Caco-2 (cell line): ENCODE measurements at regions of chr11 and their contacts with region 1.

Region 1: DNA sequence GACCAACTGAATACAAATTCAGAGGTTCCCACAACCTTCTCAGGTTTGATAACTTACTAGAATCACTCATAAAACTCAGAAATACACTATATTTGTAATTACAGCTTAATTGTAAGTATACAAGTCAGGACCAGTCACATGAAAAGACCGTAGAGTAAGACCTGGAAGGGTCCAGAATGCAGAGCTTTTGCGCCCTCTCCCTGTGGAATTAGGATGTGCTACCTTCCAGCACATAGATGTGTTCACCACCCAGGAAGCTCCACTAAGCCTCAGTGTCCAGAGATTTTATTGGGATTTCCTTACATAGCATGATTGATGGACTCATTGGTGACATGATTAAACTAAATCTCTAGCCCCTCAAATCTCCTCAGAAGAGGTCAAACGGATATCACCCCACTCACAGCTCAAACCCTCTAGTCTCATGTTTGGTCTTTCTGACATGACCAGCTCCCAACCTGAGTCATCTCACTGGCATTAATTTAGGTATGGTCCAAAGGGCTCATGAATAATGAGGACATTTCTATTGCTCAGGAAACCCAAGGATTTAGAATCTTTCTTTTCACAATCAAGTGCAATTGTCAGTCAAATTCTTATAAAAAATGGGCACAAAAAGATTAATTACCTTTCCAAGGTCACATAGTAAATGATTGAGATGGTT is 77.2 kb upstream of the UBASH3B start:
- DNase-seq: no peak
- H3K4me3 ChIP-seq: no peak overlapping the region
- H3K4me3 Mint-ChIP-seq: no peak overlapping the region
- H3K27ac Mint-ChIP-seq: no peak overlapping the region
- H3K4me1 ChIP-seq: no peaks in the 10 kb centered on the region
- H3K4me1 Mint-ChIP-seq: peaks cover 7% of the 10 kb centered on the region
- H3K27me3 ChIP-seq: no peaks in the 10 kb centered on the region
- H3K27me3 Mint-ChIP-seq: peaks cover 12% of the 10 kb centered on the region
- CTCF ChIP-seq: no peak

Region 2: DNA sequence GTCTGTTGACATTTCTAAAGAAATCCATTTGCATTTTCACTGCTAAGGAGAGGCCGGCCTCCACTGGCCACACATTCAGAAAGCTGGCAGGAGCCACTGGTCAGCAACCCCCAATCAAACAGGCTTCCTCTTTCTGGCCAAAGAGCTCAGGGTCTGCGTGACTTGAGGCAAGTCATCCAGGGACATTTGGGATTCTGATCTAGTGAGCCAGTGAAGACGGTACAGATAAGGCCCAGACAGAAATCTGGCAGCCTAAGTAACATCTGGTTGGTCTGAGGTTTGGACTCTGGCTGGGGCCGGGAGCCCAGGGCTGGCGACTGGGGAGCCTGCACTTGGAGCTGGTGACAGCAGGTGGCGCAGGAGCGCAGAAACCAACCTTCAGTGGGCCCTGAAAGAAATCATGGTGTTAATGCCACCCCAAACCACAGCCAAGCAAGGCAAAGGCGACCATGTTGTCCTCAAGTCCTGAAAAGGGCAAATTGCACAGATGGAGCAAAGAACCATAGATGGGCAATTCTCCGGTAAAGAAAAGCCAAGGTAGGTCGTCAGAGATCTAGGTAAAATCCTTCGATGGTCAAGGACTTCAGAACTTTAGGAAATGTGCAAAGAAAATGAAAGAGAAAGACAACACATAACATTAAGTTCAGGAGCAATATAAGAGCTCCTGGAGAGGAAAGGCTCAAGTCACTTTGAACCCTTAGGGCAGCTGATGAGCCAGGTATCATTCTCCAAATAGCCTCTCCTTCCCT is 362.9 kb before region 1 on chr11:
- CTCF ChIA-PET with region 1: no interaction called
- POLR2A ChIA-PET with region 1: no interaction called
- intact Hi-C with region 1: loop called (anchors 1 kb)
- DNase-seq: peak; percentile 68 to 82
- H3K4me3 ChIP-seq: no peak overlapping the region
- H3K4me3 Mint-ChIP-seq: no peak overlapping the region
- H3K27ac Mint-ChIP-seq: no peak overlapping the region
- H3K4me1 ChIP-seq: no peaks in the 10 kb centered on the region
- H3K4me1 Mint-ChIP-seq: no peaks in the 10 kb centered on the region
- H3K27me3 ChIP-seq: no peaks in the 10 kb centered on the region
- H3K27me3 Mint-ChIP-seq: peaks cover 12% of the 10 kb centered on the region
- CTCF ChIP-seq: peak; percentile 98 to 99

Region 3: GRCh38 chr11:122754553-122755322 is 176.4 kb after region 1 on chr11:
- CTCF ChIA-PET with region 1: interaction called, 9 read pairs
- POLR2A ChIA-PET with region 1: no interaction called
- intact Hi-C with region 1: loop called (anchors 1 kb)
- DNase-seq: peak in 1 of 2 experiments; percentile 65
- H3K4me3 ChIP-seq: no peak overlapping the region
- H3K4me3 Mint-ChIP-seq: no peak overlapping the region
- H3K27ac Mint-ChIP-seq: no peak overlapping the region
- H3K4me1 ChIP-seq: no peaks in the 10 kb centered on the region
- H3K4me1 Mint-ChIP-seq: no peaks in the 10 kb centered on the region
- H3K27me3 ChIP-seq: no peaks in the 10 kb centered on the region
- H3K27me3 Mint-ChIP-seq: no peaks in the 10 kb centered on the region
- CTCF ChIP-seq: peak; percentile 72 to 86

Region 4: DNA sequence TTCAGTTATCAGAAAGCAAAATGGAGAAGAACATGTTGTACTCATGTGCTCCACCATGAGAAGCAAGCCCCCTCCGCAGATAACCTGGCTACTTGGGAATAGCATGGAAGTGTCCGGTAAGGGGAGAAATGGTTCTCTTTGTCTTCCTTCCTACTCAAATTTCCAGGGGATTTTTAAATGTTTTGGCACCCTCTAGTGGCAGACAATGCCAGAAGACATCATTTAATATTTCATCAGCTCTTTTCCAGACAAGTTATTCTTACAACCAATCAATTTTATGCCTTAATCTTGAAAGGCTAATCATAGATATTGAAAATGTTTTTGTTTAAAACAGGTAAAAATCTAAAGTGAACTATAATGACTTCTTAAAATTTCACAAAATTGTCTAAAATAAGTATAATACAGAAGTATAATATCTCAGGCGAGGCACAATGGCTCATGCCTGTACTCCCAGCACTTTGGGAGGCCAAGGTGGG is 275.7 kb after region 1 on chr11:
- CTCF ChIA-PET with region 1: interaction called, 11 read pairs
- POLR2A ChIA-PET with region 1: no interaction called
- intact Hi-C with region 1: loop called (anchors 1 kb)
- DNase-seq: peak; percentile 69 to 83
- H3K4me3 ChIP-seq: no peak overlapping the region
- H3K4me3 Mint-ChIP-seq: no peak overlapping the region
- H3K27ac Mint-ChIP-seq: no peak overlapping the region
- H3K4me1 ChIP-seq: peaks cover 13% of the 10 kb centered on the region
- H3K4me1 Mint-ChIP-seq: peaks cover 13% of the 10 kb centered on the region
- H3K27me3 ChIP-seq: no peaks in the 10 kb centered on the region; the same call in 1 of the 2 replicates
- H3K27me3 Mint-ChIP-seq: peaks cover 3% of the 10 kb centered on the region
- CTCF ChIP-seq: peak; percentile 79 to 80